ENCODE measurements at regions of chr4 and their contacts with region 1.

Region 1: DNA sequence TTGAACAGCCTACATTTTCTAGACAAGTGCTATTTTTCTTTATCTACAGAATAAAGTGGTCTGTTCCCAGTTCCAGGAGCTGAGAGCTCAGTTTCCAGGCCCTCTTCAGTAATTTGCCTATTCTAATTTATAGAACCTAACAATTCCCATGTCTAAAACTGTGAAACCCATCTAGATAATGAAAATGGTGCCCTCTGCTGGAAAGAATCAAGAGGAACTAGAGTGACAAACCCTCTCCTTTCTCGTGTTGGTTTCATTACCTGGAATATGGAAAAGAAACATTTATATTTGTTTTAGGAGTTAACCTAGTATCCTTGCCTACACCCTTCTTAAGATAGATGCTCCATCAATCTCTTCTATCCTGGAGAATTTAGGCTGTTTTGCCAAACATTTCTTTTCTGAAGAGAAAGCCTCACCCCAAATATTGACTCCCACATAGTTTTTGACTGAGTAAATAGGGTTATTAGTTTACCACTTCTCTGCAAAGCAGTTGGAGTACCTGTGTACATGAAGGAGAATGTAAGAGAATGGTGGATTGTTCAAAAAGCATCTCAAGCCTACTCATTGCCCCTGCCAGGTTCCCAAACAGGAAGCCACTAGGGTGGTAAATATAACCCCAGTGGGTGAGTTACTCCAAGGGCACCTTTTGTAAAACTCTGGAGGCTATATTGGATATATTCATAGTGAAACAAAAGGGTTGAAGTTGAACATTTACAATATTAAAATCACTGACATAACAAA is 121.6 kb downstream of the RASL11B start:
- DNase-seq: no peak
- ATAC-seq: peak; percentile 44
- H3K4me3 Mint-ChIP-seq: no peak overlapping the region
- H3K27ac Mint-ChIP-seq: no peak overlapping the region
- H3K4me1 Mint-ChIP-seq: peaks cover 4% of the 10 kb centered on the region
- H3K27me3 Mint-ChIP-seq: no peaks in the 10 kb centered on the region

Region 2: DNA sequence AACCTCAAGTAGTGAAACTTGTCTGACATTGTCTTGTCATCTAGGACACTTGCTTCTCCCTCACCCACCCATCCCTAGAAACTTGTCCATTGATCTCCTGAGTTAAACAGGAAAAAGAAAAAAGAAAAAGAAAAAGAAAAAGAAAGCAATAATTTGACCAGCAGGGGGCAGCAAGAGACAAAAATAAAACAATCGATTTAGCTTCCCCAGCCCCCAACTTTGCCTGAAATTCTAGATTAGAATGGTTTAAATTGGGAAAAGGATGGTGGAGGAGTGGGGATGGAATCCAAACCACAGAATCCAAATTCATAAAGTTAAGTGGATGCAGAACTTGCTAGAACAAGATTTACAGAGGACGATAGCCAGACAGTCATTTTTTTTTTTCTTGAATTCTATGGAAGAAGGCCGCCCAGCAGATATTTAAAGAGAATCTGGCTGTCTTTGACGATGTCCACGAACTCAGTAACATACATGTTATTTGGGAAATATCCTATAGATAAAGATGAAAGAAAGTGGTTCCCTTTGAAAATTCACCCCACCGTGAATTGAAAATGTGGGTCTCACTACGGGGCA is 607.5 kb before region 1 on chr4:
- CTCF ChIA-PET with region 1: interaction called, 8 read pairs
- POLR2A ChIA-PET with region 1: no interaction called
- intact Hi-C with region 1: loop called (anchors 1 to 2 kb)
- DNase-seq: peak; percentile 13
- ATAC-seq: no peak
- H3K4me3 Mint-ChIP-seq: no peak overlapping the region
- H3K27ac Mint-ChIP-seq: no peak overlapping the region
- H3K4me1 Mint-ChIP-seq: no peaks in the 10 kb centered on the region
- H3K27me3 Mint-ChIP-seq: peaks cover 13% of the 10 kb centered on the region

Region 3: DNA sequence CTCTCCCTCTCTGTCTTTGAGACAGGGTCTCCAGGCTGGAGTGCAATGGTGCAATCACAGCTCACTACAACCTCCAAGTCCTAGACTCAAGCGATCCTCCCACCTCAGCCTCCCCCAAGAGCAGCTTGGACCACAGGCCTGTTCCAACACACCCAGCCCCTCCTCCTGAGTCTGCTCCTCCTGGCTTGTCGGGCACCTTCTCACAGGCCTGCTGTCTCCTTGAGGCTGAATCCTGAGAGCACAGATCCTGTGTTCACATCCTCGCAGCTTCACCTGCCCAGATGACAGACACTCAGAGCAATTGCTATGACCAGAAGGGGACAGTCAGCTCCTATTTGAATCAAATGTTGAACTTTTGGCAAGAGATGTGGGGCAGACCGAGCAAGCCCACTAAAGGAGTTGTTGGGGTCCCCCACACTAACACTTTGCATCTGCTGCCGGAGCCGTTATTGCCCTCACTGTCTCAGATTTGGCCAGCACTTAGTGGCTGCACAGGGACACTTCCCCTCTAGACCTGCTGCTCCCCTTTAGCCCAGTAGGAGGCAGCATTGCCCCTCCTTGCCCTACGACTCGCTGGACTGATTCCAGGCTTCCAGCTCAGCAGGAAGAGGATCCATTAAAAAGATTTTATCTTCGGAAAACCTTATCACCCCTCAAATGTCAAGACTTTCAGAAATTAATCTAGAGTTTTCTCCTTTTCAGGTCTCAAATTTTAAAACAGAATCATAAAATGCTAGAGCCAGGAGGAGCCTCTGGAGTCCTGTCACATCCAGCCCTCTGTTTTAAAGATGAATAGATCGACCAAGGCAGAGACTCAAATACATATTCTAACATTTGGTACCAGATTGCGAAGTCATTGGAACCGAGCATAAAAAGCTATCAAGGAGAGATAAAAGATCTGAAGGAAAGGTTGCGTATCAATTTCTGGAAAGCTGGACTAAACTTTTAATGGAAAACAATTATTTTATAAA is 438.3 kb before region 1 on chr4:
- CTCF ChIA-PET with region 1: interaction called, 27 read pairs
- POLR2A ChIA-PET with region 1: no interaction called
- intact Hi-C with region 1: loop called (anchors 2 kb)
- DNase-seq: peak; percentile 76
- ATAC-seq: peak; percentile 61
- H3K4me3 Mint-ChIP-seq: no peak overlapping the region
- H3K27ac Mint-ChIP-seq: no peak overlapping the region
- H3K4me1 Mint-ChIP-seq: peaks cover 2% of the 10 kb centered on the region
- H3K27me3 Mint-ChIP-seq: peaks cover 2% of the 10 kb centered on the region

Region 4: DNA sequence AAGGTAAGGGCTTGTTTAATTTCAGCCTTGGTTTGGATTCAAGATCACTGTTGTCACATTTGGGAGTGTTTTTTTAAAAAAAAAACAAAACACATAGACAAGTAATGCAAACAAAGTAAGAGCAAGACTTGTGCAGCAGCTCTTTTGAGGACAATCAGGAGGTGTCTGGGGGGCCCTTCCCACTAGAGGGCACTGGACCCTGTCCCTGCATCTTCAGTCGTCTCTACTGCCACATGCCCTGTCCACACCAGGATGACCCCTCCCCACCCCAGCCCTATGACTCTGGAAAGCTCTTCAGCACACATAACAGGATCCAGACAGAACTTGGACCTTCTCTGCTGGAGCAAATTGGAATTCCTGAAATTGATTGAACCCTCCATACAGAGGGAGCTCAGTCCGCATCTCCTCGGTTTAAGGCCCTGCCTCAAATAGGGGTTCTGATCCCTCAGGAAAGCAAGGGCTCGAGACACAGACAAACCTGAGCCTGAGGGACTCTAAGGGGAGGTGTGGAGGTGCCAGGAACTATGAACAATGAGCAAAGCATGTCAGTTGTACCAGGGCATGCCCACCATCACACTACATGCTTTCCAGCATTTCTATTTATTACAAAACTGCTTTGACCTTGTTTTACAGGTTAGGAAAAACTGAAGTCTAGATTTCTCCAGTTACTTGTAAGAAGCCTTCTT is 395.5 kb before region 1 on chr4:
- CTCF ChIA-PET with region 1: no interaction called
- POLR2A ChIA-PET with region 1: no interaction called
- intact Hi-C with region 1: loop called in 1 of 2 experiments (anchors 5 kb)
- DNase-seq: peak; percentile 42
- ATAC-seq: peak; percentile 49
- H3K4me3 Mint-ChIP-seq: no peak overlapping the region
- H3K27ac Mint-ChIP-seq: no peak overlapping the region
- H3K4me1 Mint-ChIP-seq: peaks cover 15% of the 10 kb centered on the region
- H3K27me3 Mint-ChIP-seq: no peaks in the 10 kb centered on the region

Region 5: DNA sequence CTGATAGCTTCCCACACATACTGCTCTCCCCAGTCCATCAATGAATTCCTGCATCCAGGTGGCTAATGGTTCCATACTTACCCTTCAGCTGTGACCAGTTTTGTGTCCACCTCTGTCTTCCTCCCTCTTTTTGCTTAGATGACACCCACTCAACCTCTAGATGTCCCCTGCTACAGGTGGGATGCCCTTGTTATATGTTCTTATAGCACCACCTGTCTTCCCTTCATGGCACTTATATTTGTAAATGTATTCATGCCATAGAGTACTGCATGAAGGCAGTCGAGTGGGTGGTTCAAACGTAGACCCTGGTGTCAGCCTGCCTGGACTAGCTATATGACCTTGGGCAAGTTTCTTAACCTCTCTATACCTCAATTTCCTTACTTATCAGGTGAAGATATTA is 318.1 kb before region 1 on chr4:
- CTCF ChIA-PET with region 1: no interaction called
- POLR2A ChIA-PET with region 1: no interaction called
- intact Hi-C with region 1: loop called in 1 of 2 experiments (anchors 2 kb)
- DNase-seq: peak; percentile 10
- ATAC-seq: peak; percentile 71
- H3K4me3 Mint-ChIP-seq: no peak overlapping the region
- H3K27ac Mint-ChIP-seq: no peak overlapping the region
- H3K4me1 Mint-ChIP-seq: peaks cover 2% of the 10 kb centered on the region
- H3K27me3 Mint-ChIP-seq: peaks cover 19% of the 10 kb centered on the region

Region 6: GRCh38 chr4:52812634-52813033 is 171.1 kb before region 1 on chr4:
- CTCF ChIA-PET with region 1: no interaction called
- POLR2A ChIA-PET with region 1: no interaction called
- intact Hi-C with region 1: no loop called
- DNase-seq: no peak
- ATAC-seq: no peak
- H3K4me3 Mint-ChIP-seq: no peak overlapping the region
- H3K27ac Mint-ChIP-seq: no peak overlapping the region
- H3K4me1 Mint-ChIP-seq: no peaks in the 10 kb centered on the region
- H3K27me3 Mint-ChIP-seq: no peaks in the 10 kb centered on the region

Region 7: GRCh38 chr4:52824603-52825459 is 158.9 kb before region 1 on chr4:
- CTCF ChIA-PET with region 1: interaction called, 3 read pairs
- POLR2A ChIA-PET with region 1: no interaction called
- intact Hi-C with region 1: loop called in 1 of 2 experiments (anchors 5 kb)
- DNase-seq: no peak
- ATAC-seq: no peak
- H3K4me3 Mint-ChIP-seq: no peak overlapping the region
- H3K27ac Mint-ChIP-seq: peak overlapping the region; percentile 41
- H3K4me1 Mint-ChIP-seq: peaks cover 37% of the 10 kb centered on the region
- H3K27me3 Mint-ChIP-seq: no peaks in the 10 kb centered on the region

Region 8: DNA sequence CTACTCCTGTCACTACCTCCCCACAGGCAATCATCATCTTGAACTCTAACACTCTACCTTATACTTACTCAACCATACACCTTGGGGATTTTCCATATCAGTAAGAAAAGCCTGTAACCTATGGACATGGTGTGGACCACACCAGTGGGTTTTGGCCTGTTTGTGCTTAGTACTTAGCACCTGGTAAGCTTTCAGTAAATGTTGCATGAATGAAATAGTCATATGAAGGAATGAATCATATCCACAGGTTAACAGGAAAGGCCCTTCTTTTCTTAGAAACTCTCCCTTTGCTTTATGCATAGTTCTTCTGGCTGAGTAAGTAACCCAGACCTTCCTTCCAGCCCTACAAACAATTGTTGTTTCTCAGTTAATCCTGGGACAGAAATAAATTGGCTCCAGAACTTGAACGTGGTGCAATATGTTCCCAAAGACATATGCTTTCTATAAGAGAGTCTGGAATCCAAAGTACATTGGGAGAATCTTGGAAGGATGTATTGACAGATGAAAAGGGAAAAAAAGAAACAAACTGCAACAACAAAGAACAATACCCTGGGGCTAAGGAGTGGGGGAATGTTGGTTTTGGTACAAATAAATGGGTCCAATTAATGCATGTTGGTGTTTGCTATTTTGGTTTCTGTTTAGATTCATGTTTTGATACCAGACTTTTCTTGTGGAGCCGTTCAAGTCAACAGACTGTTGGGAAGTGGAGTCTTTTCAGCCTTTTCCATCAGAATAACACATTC is 93.8 kb before region 1 on chr4:
- CTCF ChIA-PET with region 1: no interaction called
- POLR2A ChIA-PET with region 1: no interaction called
- intact Hi-C with region 1: no loop called
- DNase-seq: peak; percentile 44
- ATAC-seq: peak; percentile 89
- H3K4me3 Mint-ChIP-seq: no peak overlapping the region
- H3K27ac Mint-ChIP-seq: peak overlapping the region; percentile 62
- H3K4me1 Mint-ChIP-seq: peaks cover 17% of the 10 kb centered on the region
- H3K27me3 Mint-ChIP-seq: no peaks in the 10 kb centered on the region

Region 9: DNA sequence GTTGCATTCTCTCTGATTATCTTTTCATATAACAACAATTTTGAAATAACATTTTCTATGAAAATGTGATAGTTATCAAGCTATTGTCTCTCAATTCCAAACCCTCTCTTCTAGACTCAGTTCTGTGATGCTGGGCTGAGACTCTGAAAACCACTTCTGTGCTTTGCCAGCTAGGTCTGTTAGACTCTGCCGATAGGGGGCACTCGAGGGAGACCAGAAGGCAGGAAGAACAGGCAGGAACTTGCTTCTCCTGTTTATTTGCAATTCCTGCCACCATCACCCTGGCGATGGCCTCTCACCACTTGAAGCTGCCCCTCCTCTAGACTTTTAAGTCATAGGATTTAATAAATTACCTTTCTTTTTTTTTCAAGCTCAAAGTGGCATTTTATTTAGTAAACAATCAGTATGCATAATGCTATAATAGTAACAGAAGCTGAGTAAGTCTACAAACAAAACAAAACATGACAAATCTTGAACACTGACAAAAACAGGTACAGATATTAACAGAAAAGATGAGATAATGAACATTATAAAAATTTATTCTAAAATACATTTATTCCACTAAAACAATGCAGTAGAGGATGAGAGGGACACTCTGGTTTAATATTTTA is 71.9 kb before region 1 on chr4:
- CTCF ChIA-PET with region 1: interaction called, 4 read pairs
- POLR2A ChIA-PET with region 1: no interaction called
- intact Hi-C with region 1: loop called in 1 of 2 experiments (anchors 5 kb)
- DNase-seq: peak; percentile 87
- ATAC-seq: peak; percentile 36
- H3K4me3 Mint-ChIP-seq: no peak overlapping the region
- H3K27ac Mint-ChIP-seq: no peak overlapping the region
- H3K4me1 Mint-ChIP-seq: peaks cover 1% of the 10 kb centered on the region
- H3K27me3 Mint-ChIP-seq: no peaks in the 10 kb centered on the region

Region 10: GRCh38 chr4:53039741-53040458 is 56.2 kb after region 1 on chr4:
- CTCF ChIA-PET with region 1: no interaction called
- POLR2A ChIA-PET with region 1: no interaction called
- intact Hi-C with region 1: no loop called
- DNase-seq: no peak
- ATAC-seq: no peak
- H3K4me3 Mint-ChIP-seq: no peak overlapping the region
- H3K27ac Mint-ChIP-seq: no peak overlapping the region
- H3K4me1 Mint-ChIP-seq: no peaks in the 10 kb centered on the region
- H3K27me3 Mint-ChIP-seq: no peaks in the 10 kb centered on the region

Region 11: DNA sequence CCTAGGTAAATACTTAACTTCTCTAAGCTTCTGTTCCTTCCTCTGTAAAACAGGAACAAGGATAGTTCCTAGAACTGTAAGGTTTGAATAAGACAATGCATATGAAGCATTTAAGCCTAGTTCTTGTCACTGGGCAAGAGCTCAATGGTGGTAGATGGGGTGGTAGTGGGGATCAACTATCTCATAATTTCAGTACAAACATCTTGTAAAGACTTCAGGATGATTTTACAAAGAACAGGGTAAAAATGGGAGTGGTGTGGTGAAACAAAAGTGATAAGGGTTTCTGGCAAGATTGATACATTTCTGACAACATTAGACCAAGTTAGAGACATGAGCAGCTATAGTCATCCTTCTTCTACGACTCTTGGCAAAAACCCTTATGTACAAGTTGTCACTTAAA is 244.3 kb after region 1 on chr4:
- CTCF ChIA-PET with region 1: no interaction called
- POLR2A ChIA-PET with region 1: no interaction called
- intact Hi-C with region 1: no loop called
- DNase-seq: no peak
- ATAC-seq: no peak
- H3K4me3 Mint-ChIP-seq: no peak overlapping the region
- H3K27ac Mint-ChIP-seq: no peak overlapping the region
- H3K4me1 Mint-ChIP-seq: no peaks in the 10 kb centered on the region
- H3K27me3 Mint-ChIP-seq: no peaks in the 10 kb centered on the region

Measured in activated CD4-positive, alpha-beta T cell treated with anti-CD3 and anti-CD28 coated beads for 36 hours (primary cell).